Left cardiac atrium (tissue), 4 donors: ENCODE measurements at regions of chr9 and their contacts with region 1.

Region 1: DNA sequence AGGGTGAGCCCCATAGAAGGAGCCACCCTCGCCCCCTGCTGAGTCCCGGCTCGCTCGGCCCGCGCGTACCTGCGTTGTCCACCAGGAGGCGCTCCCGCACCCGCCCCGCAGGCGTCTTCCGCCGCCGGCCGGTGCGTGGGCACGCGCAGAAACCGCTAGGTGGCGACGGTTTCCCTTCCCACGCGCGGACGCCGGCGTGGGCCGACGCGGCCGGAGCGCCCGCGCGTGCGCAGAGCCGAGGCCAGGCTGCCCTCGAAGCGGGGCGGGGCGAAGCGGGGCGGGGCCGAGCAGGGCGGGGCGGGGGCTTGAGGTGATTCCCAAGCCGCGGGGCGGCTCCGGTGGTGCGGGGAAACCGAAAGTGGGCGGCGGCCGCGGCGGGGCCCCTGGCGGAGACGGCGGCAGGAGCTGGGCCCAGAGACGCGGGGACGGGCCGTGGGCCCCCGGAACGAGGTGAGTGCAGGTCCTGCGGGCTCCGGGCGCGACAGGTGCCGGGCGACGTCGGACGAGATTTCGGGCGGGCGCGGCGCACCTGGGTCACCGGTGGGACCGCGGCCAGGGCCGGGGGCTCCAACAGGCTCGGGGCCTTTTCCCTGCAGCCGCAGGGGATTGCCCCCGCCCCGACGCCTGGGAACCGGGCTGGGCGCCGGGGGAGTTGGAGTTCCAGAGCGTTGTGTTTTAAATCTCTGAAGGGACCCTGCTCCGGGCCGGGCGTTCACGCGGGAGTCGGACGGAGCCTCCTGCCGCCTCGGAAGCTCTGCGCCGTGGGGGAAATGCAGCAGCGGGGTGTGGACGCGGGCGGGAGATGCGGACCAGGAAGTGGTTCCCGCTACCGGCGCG is at the start of gene TDRD7:
- DNase-seq: peak; percentile 91
- ATAC-seq: peak; percentile 97 to 98
- total RNA-seq, gene TDRD7: 8.6 to 10.0 TPM

Region 2: DNA sequence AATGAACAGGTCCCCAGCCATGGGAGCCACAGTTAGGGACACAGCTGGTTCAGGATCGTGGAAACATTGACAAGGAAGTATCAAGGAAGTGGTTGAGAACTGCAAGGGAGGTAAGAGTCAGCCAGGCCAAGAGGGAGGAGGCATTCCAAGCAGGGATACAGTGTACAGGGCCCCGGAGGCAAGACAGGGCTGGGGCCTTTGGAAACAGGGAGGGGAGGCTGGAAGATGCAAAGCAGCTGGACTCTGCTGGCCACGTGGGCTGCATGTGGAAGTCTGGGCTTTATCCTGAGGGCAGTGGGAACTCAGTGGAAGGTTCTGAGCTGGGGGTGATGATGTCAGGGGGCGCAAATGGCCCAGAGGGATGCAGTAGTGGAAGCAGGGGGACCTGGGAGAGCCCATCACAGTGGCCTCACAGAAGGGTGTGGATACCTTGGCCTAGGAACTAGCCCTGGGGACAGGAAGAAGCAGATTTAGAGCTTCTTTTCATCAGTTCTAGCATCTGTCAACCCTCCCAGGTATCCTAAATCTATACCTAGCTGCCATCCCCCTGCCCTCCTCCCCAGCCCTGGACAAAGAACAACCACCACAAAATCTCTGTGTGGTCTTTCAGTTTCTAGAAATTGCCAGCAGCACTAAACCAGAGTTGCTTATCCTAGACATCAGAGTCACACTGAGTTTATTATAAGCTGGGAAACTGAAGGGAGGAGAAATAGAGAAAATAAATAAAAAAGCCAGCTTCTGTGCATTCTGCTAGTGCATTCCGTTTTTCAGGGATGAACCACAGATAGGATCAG is 90.1 kb before region 1 on chr9:
- intact Hi-C with region 1: no loop called
- DNase-seq: no peak
- ATAC-seq: no peak

Region 3: DNA sequence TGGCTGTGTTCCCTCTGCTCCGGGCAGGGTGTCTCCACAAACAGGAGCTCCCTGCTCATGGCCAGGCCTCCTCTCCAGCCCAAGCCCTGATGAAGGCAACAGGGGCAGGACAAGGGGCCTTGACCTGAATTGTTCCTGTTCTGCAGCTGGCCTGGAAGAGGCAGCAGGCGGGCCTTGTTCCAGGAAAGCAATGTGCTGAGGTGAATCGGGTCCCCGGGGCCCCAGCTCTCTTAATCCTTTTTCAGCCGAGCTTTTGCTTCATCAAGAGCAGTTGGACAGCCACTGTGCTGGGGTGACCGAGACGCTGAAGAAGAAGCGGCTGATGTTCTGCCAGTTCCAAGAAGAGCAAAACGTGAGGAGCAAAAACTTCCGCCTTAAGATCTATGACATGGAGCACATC is 63.1 kb before region 1 on chr9:
- intact Hi-C with region 1: no loop called
- DNase-seq: no peak
- ATAC-seq: no peak

Region 4: DNA sequence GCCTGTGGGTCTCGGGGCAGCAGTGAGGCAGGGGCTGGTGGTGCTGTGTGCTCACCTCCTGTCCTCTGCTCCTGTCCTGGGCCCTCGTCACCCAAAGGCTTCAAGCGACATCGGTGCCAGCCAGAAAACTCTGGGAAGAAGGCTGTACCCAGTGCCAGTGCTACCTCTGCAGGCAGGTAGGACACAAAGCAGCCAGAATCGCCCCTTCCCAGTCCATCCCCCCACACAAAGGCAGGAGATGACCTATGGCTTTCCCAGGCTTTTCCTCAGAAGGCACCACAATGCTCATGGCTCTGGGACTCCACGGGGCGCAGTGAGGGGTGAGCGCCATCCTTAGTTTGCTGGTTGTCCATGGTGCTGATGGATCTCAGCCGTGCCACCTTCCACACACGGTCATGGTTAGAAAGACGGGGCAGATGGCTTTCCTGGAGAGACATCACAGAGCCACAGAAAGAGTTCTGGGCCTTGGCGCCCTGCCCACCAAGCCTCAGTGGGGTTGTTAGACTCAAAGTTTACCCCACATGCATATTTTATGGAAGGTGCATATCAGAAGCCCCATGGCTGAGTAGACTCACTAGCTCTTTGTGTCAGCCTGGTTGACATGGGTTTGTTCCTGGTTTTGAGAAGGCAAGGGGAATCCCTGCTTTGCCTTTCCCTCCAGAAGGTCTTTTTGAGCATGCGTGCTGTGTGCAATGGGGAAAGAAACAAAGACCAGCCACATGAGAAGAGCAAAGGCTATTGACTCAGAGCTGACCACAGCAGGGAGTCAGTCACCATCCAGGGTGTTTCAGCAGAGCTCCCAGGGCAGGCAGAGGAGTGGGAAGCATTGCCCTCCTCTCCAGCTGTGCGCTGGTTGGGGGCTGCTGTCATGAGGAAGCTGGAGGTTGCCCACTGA is 49.5 kb before region 1 on chr9:
- intact Hi-C with region 1: no loop called
- DNase-seq: no peak
- ATAC-seq: no peak

Region 5: DNA sequence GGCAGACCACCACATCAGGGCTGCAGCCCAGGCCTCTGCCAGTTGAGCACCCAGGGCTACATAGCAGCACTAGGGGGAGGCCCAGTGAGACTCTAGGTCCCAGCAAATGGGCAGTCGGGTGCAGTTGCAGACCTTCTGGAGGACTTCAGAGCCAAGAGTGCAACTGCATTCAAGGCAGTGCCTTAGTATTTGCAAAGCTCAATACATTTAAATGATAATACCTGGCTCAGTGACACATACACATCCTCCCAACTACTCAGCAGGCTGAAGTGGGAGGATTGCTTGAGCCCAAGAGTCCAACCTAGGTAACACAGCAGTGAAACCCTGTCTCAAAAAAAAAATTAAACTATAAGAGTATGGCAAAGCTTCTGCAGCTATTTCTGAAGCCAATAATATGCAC is 50.9 kb after region 1 on chr9:
- intact Hi-C with region 1: loop called in 1 of 2 experiments (anchors 5 kb)
- DNase-seq: no peak
- ATAC-seq: no peak

Region 6: DNA sequence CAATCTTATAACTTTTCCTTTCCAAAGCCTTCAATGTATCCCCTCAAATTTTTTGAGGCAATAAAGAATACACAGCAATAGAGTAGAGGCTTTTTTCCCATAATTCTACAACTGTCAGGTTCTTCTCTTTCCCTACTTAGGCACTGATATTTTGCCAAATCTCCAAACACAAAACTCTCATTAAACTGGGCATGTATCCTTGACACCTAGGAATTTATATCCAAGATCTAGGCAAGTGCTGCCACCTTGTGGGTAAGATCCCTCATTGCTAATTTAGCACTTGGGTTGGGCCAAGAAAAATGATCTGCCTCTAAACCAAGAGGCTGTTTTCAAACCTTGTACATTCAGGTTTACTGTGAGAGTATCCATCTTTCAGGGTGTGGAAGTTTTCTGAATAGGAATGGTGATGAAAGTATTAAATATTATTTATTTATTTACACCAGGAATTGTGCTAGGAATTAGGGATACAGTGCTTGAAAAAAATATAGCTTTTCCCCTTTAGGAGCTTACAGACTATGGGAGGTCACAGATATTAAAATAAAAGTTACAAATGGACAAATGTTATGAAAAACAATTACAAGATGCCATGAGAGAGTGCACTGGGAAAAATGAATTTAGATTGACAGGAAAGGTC is 203.5 kb after region 1 on chr9:
- intact Hi-C with region 1: loop called in 1 of 2 experiments (anchors 5 kb)
- DNase-seq: peak; percentile 54
- ATAC-seq: peak; percentile 70 to 73